ENCODE measurements at regions of chr14 and their contacts with region 1.

Region 1: DNA sequence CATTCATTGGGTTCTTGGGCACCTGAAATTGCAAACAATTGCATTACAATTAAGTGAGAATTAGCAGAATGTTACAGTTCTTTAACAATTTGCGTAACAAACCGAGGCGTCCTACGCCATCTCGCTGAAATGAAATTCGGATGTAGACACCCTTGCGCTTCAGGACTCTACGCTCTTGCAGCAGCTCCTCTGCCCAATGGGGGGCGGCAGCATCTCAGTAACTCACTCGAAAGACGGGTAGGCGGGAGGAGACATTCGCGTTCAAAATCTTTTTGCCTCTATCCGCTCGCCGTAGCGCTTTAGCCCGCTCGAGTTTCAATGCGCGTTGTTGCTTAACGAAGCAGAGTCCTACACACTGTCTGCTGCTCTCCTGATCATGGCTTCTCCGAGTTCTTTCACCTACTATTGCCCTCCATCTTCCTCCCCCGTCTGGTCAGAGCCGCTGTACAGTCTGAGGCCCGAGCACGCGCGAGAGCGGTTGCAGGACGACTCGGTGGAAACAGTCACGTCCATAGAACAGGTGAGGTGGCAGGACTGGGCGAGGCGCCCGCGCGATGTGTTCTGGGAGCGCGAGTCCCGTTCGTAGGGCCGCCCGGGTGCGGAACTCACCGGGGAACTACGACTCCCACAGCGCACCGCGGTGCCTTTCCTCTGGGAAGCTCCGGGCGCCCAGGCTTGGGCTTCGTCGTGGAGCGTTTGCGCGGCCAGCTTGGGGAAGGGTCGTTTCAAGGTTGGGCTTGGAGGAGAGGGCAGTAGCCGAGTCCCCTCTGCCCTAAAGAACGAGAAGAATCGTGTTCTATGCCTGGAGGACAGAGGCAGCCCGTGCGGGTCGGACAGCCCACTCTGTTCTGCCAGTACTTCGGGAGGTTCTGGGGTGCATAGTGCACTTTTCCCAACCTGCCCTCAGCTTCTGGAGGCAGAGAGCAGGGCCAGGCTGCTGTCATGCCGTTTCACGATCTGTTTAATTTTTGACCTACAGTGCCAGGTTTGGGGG is at the start of gene FNTB:
- DNase-seq: peak; percentile 88
- ATAC-seq: peak; percentile 93
- H3K4me3 Mint-ChIP-seq: peak within 1 kb of the TSS; percentile 99
- H3K27ac Mint-ChIP-seq: peak within 1 kb of the TSS; percentile 99
- H3K4me1 Mint-ChIP-seq: peaks cover 34% of the 10 kb centered on the region
- H3K27me3 Mint-ChIP-seq: peaks cover 14% of the 10 kb centered on the region
- CTCF ChIP-seq: no peak
- total RNA-seq, gene FNTB: 7.9 and 10.5 TPM in 2 replicates

Region 2: DNA sequence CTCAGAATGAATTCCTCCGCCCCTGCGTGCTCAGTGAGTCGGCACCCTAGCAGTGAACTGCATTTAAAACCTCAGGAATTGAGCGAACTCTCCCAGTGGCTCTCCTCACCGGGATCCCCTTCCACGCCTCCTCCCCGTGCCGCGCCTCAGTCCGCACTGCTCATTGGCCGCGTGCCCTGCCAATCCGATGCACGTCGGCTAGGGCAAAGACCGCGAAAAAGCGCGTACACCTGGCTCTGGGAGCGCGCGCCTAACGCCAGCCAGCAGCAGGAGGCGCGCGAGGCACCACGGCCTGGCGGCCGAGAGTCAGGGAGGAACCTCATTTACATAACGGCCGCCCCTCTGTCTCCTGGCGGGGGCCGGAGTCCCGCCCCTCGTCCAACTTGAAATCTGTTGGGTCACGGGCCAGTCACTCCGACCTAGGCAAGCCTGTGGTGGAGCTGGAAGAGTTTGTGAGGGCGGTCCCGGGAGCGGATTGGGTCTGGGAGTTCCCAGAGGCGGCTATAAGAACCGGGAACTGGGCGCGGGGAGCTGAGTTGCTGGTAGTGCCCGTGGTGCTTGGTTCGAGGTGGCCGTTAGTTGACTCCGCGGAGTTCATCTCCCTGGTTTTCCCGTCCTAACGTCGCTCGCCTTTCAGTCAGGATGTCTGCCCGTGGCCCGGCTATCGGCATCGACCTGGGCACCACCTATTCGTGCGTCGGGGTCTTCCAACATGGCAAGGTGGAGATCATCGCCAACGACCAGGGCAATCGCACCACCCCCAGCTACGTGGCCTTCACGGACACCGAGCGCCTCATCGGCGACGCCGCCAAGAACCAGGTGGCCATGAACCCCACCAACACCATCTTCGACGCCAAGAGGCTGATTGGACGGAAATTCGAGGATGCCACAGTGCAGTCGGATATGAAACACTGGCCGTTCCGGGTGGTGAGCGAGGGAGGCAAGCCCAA is 446.4 kb before region 1 on chr14 and contains the start of gene HSPA2:
- CTCF ChIA-PET with region 1: no interaction called
- POLR2A ChIA-PET with region 1: interaction called, 3 read pairs
- intact Hi-C with region 1: loop called (anchors 2 kb)
- DNase-seq: peak; percentile 93
- ATAC-seq: peak; percentile 90
- H3K4me3 Mint-ChIP-seq: peak within 1 kb of the TSS; percentile 100
- H3K27ac Mint-ChIP-seq: peak within 1 kb of the TSS; percentile 96
- H3K4me1 Mint-ChIP-seq: peaks cover 33% of the 10 kb centered on the region
- H3K27me3 Mint-ChIP-seq: peaks cover 2% of the 10 kb centered on the region
- CTCF ChIP-seq: no peak
- total RNA-seq, gene HSPA2: 3.8 and 5.4 TPM in 2 replicates

Region 3: DNA sequence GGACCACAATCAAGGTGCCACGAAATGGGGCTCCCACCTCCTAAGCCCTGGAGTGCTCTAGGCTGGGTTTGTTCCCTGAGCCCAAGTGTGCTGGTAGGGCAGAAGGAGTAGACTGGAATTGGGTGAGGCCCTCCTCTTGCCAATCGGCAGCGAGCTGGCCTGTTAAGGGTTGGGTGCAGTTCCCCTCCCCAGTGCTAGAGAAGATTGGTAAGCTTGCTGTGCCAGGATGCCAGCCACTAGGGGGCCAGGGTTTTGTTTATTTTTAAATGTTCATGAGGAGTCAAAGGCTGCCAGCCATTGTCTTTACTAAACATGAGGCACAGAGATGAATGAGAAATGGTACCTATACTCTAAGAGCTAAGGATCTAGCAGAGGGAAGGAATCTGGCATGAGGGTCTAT is 186.9 kb before region 1 on chr14:
- CTCF ChIA-PET with region 1: no interaction called
- POLR2A ChIA-PET with region 1: no interaction called
- intact Hi-C with region 1: loop called (anchors 2 kb)
- DNase-seq: no peak
- ATAC-seq: no peak
- H3K4me3 Mint-ChIP-seq: no peak overlapping the region
- H3K27ac Mint-ChIP-seq: no peak overlapping the region
- H3K4me1 Mint-ChIP-seq: no peaks in the 10 kb centered on the region
- H3K27me3 Mint-ChIP-seq: peaks cover 13% of the 10 kb centered on the region
- CTCF ChIP-seq: no peak

Region 4: GRCh38 chr14:65019944-65020566 is 33.2 kb after region 1 on chr14:
- CTCF ChIA-PET with region 1: interaction called, 4 read pairs
- POLR2A ChIA-PET with region 1: interaction called, 5 read pairs
- intact Hi-C with region 1: loop called (anchors 1 kb)
- DNase-seq: no peak
- ATAC-seq: no peak
- H3K4me3 Mint-ChIP-seq: no peak overlapping the region
- H3K27ac Mint-ChIP-seq: no peak overlapping the region
- H3K4me1 Mint-ChIP-seq: no peaks in the 10 kb centered on the region
- H3K27me3 Mint-ChIP-seq: no peaks in the 10 kb centered on the region
- CTCF ChIP-seq: no peak

Region 5: DNA sequence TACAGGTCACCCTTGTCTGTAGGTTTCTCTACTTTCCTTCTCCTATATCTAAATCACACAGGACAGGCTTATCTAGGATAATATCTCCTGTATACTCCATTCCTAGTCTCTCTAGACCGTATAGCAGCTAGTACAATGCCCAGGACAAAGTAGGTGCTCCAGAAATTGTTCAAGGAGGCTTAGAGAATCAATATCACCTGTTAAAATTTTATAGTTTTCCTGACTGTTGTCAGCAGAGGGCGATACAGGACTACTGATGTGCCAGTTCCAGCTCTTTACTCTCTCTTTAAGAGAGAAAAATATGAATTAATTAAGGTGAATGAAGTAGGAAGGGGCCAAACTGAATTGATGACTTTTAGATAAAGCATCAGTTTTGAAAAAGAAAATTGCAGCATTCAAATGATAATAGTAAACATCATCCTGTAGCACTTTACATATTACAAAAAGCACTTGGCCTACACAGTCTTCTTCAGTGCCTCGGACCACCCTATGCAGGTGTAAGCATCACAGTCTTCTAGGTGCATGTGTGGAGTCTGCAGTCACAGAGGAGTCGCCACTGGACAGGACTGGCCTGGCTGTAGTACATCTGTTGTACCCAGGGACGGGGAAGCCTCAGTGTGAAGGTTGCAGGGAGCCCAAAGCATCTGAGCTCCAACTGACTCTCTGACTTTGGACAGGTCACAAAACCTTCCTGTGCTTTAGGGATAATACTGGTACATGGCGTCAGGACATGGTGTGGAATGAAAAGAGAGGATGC is 177.4 kb after region 1 on chr14:
- CTCF ChIA-PET with region 1: interaction called, 4 read pairs
- POLR2A ChIA-PET with region 1: no interaction called
- intact Hi-C with region 1: loop called (anchors 1 kb)
- DNase-seq: no peak
- ATAC-seq: peak; percentile 33
- H3K4me3 Mint-ChIP-seq: no peak overlapping the region
- H3K27ac Mint-ChIP-seq: peak overlapping the region; percentile 56
- H3K4me1 Mint-ChIP-seq: peaks cover 53% of the 10 kb centered on the region
- H3K27me3 Mint-ChIP-seq: no peaks in the 10 kb centered on the region
- CTCF ChIP-seq: peak; percentile 29

Region 6: DNA sequence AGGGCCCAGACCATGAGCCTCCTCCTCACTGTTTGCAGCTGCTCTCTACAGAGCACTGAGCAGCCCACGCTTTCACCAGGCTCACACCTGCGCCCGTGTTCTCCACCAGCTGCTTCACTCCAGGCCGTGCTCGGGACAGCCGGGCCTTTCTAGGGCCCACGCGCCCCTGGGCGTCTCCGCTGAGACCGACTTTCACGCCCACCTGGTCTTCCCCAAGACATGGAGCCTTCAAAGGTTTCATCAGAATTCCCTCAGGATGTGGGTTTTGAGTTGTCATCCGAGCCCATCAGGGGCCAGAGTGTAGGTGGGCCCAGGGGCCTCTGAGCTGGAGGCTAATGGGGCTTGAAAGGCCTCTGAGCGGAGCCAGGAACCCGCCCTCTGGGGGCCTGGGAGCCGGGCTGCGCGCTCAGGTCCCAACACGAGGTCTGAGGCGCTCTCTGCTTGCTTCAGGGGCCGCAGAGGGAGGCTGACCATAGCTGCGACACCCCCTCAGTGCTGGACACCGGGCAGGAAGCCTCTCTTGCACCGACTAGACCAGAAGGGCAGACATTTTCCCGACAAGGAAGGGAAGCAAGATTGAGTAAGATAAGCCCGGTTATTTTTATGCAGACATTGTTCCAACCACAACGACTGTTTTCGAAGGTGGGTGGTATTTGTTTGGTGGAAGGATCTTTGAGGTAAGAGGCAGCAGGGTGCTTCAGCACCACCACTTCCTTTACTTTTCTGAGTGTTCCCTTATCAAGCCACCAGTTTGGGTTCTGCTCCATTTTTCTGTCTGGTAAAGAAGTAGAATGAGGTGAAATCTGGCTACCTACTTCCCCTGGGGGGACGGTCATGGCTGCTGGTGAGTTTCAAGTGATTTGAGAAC is 300.6 kb after region 1 on chr14:
- CTCF ChIA-PET with region 1: interaction called, 4 read pairs
- POLR2A ChIA-PET with region 1: no interaction called
- intact Hi-C with region 1: loop called (anchors 1 kb)
- DNase-seq: peak; percentile 60
- ATAC-seq: peak; percentile 64
- H3K4me3 Mint-ChIP-seq: peak overlapping the region; percentile 74
- H3K27ac Mint-ChIP-seq: peak overlapping the region; percentile 96
- H3K4me1 Mint-ChIP-seq: peaks cover 89% of the 10 kb centered on the region
- H3K27me3 Mint-ChIP-seq: no peaks in the 10 kb centered on the region
- CTCF ChIP-seq: no peak

Region 7: GRCh38 chr14:66070509-66071319 is 1083.8 kb after region 1 on chr14:
- CTCF ChIA-PET with region 1: interaction called, 6 read pairs
- POLR2A ChIA-PET with region 1: no interaction called
- intact Hi-C with region 1: loop called (anchors 1 kb)
- DNase-seq: peak; percentile 48
- ATAC-seq: peak; percentile 75
- H3K4me3 Mint-ChIP-seq: no peak overlapping the region
- H3K27ac Mint-ChIP-seq: no peak overlapping the region
- H3K4me1 Mint-ChIP-seq: no peaks in the 10 kb centered on the region
- H3K27me3 Mint-ChIP-seq: peaks cover 7% of the 10 kb centered on the region
- CTCF ChIP-seq: peak; percentile 63

Measured in activated B cell treated with CpG ODN at 0.5 μM for 24 hours (primary cell).